ENCODE measurements at regions of chr1 and their contacts with region 1.

Region 1: GRCh38 chr1:173997796-173998195 is 24.4 kb downstream of the RC3H1 start:
- DNase-seq: peak; percentile 70
- ATAC-seq: peak; percentile 81
- H3K4me3 ChIP-seq: no peak overlapping the region
- H3K27ac ChIP-seq: no peak overlapping the region
- H3K4me1 ChIP-seq: peaks cover 19% of the 10 kb centered on the region
- H3K27me3 ChIP-seq: no peaks in the 10 kb centered on the region
- CTCF ChIP-seq: no peak
- POLR2A ChIP-seq: no peak
- RAD21 ChIP-seq: no peak

Region 2: GRCh38 chr1:174022080-174022975 is 24.5 kb after region 1 on chr1 and contains the start of gene RC3H1:
- CTCF ChIA-PET with region 1: interaction called, 4 read pairs
- POLR2A ChIA-PET with region 1: no interaction called
- dilution Hi-C with region 1: no loop called
- in situ Hi-C with region 1: no loop called
- intact Hi-C with region 1: loop called (anchors 2 kb)
- DNase-seq: peak; percentile 75
- ATAC-seq: peak; percentile 97
- H3K4me3 ChIP-seq: peak within 1 kb of the TSS; percentile 99
- H3K27ac ChIP-seq: peak within 1 kb of the TSS; percentile 94
- H3K4me1 ChIP-seq: peaks cover 6% of the 10 kb centered on the region
- H3K27me3 ChIP-seq: no peaks in the 10 kb centered on the region
- CTCF ChIP-seq: no peak
- POLR2A ChIP-seq: peak; percentile 91
- RAD21 ChIP-seq: no peak
- total RNA-seq, gene RC3H1: 26.1 and 39.3 TPM in 2 replicates

Region 3: DNA sequence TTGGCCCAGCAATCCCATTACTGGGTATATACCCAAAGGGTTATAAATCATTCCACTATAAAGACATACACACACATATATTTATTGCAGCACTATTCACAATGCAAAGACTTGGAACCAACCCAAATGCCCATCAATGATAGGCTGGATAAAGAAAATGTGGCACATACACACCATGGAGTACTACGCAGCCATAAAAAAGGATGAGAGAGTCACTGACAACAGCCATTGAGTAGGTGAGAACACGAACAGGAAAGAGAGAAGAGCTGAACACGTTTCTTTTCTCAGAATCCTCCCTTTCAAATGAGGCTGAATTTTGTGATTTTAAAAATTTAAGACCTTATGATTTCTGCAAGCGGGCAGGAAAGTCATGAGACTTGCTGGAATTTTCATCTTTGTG is 151.4 kb after region 1 on chr1:
- CTCF ChIA-PET with region 1: no interaction called
- POLR2A ChIA-PET with region 1: no interaction called
- dilution Hi-C with region 1: no loop called
- in situ Hi-C with region 1: no loop called
- intact Hi-C with region 1: loop called (anchors 5 kb)
- DNase-seq: no peak
- ATAC-seq: no peak
- H3K4me3 ChIP-seq: no peak overlapping the region
- H3K27ac ChIP-seq: no peak overlapping the region
- H3K4me1 ChIP-seq: no peaks in the 10 kb centered on the region
- H3K27me3 ChIP-seq: no peaks in the 10 kb centered on the region; the same call in 1 of the 2 replicates
- CTCF ChIP-seq: no peak
- POLR2A ChIP-seq: no peak
- RAD21 ChIP-seq: no peak